Adrenal gland (tissue), 19 donors: ENCODE measurements at regions of chr5 and their contacts with region 1.

Region 1: GRCh38 chr5:73792687-73793320 is 166.8 kb downstream of the ARHGEF28 start:
- DNase-seq: peak; percentile 61 to 94 (median 82)
- H3K4me3 ChIP-seq: no peak overlapping the region
- H3K27ac ChIP-seq: no peak overlapping the region
- H3K4me1 ChIP-seq: peaks cover 29 to 48% of the 10 kb centered on the region in 2 donors
- H3K27me3 ChIP-seq: no peaks in the 10 kb centered on the region
- CTCF ChIP-seq: peak; percentile 95 to 98 (median 96)
- POLR2A ChIP-seq: no peak

Region 2: DNA sequence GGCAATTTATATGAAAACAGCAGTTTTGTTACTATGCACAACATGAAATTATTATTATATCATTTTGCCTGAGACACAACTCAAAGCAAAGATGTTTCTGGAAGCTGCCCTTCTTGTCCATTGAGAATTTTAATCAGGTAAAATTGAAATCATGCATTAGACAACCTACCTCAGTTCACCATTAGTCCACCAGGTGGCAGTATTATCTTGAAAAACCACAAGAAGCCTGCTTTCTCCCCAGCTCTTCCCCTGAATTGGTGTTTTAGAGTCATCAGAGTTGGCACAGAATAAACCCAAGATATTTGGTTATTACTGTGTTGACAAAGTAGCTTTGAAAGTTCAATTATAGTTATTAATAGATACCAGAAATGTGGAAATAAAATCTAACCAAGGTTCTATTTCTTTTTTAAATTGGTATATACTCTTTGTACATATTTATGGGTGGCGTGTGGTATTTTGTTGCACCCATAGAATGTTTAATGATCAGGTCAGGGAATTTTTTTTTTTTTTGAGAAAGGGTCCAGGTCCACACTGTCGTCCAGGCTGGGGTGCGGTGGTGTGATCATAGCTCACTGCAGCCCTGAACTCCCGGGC is 201.6 kb before region 1 on chr5:
- intact Hi-C with region 1: loop called (anchors 2 to 5 kb)
- DNase-seq: peak; percentile 32 to 80 (median 72)
- H3K4me3 ChIP-seq: no peak overlapping the region
- H3K27ac ChIP-seq: no peak overlapping the region
- H3K4me1 ChIP-seq: peaks cover 0 to 8% of the 10 kb centered on the region in 2 donors
- H3K27me3 ChIP-seq: no peaks in the 10 kb centered on the region
- CTCF ChIP-seq: peak; percentile 91 to 95 (median 93)
- POLR2A ChIP-seq: no peak

Region 3: DNA sequence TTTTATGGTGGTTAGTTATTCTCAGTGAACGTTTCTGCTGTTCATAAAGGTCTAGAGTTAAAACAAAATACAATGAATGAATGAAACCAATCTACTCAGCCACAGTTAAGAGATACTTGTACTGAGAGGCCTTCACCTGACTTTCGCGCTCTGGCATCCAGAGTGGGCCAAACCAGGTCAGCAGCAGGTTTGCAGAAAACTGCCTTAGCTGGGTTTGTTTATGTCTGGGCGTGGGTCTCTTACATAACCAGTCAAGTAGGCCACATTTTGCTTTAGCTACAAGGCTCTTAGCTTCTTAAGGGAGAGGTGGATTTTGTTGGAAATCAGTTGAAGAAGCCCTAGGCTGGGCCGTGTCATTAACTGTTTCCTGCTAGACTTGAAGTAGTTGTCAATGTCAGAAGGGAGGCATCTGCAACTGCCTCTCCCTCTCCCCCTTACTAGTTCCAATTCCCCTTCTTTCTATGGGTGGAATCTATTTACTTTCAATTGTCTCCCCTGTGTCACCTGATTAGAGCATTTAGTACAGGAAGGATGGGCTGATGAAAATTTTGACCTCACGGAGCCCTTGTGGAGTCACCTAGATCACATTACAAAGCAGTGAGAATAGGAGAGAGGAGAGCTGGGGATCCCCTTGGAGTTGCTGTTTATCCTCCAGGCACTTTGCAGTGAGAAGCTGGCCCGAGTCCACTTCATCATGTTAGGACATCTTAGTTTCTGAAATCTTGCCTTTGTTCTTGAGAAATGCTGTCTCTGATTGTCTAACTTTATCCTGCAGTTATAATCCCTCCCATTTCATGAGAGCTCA is 33.7 kb after region 1 on chr5:
- intact Hi-C with region 1: no loop called
- DNase-seq: peak in 6 of 7 donors; percentile 53 to 72 (median 57)
- H3K4me3 ChIP-seq: no peak overlapping the region
- H3K27ac ChIP-seq: peak overlapping the region; percentile 8 to 71 (median 52)
- H3K4me1 ChIP-seq: peaks cover 18 to 33% of the 10 kb centered on the region in 2 donors
- H3K27me3 ChIP-seq: no peaks in the 10 kb centered on the region
- CTCF ChIP-seq: no peak
- POLR2A ChIP-seq: no peak

Region 4: GRCh38 chr5:75192804-75193203 is 1400.0 kb after region 1 on chr5:
- intact Hi-C with region 1: no loop called
- DNase-seq: no peak
- H3K4me3 ChIP-seq: no peak overlapping the region
- H3K27ac ChIP-seq: no peak overlapping the region
- H3K4me1 ChIP-seq: no peaks in the 10 kb centered on the region
- H3K27me3 ChIP-seq: no peaks in the 10 kb centered on the region
- CTCF ChIP-seq: no peak
- POLR2A ChIP-seq: no peak